ENCODE measurements at regions of chr5 and their contacts with region 1.

Region 1: GRCh38 chr5:38193015-38193581 is 65.3 kb upstream of the EGFLAM start:
- DNase-seq: peak; percentile 12 to 18 (median 14)
- H3K4me3 ChIP-seq: no peak overlapping the region
- H3K4me3 Mint-ChIP-seq: no peak overlapping the region
- H3K27ac ChIP-seq: no peak overlapping the region
- H3K27ac Mint-ChIP-seq: no peak overlapping the region
- H3K4me1 ChIP-seq: no peaks in the 10 kb centered on the region
- H3K4me1 Mint-ChIP-seq: peaks cover 4% of the 10 kb centered on the region
- H3K27me3 ChIP-seq: peaks cover 3 to 5% of the 10 kb centered on the region in 2 donors
- H3K27me3 Mint-ChIP-seq: peaks cover 5 to 22% (median 14%) of the 10 kb centered on the region in 3 donors
- CTCF ChIP-seq: peak; percentile 85

Region 2: GRCh38 chr5:37412515-37413277 is 780.4 kb before region 1 on chr5:
- intact Hi-C with region 1: loop called in 1 of 2 experiments (anchors 10 kb)
- DNase-seq: peak; percentile 35 to 66 (median 59)
- H3K4me3 ChIP-seq: no peak overlapping the region
- H3K4me3 Mint-ChIP-seq: no peak overlapping the region
- H3K27ac ChIP-seq: no peak overlapping the region
- H3K27ac Mint-ChIP-seq: peak overlapping the region in 2 of 7 donors; percentile 14 to 70
- H3K4me1 ChIP-seq: no peaks in the 10 kb centered on the region
- H3K4me1 Mint-ChIP-seq: no peaks in the 10 kb centered on the region
- H3K27me3 ChIP-seq: no peaks in the 10 kb centered on the region
- H3K27me3 Mint-ChIP-seq: peaks cover 0 to 1% (median 0%) of the 10 kb centered on the region in 3 donors
- CTCF ChIP-seq: peak; percentile 81

Region 3: GRCh38 chr5:37837414-37838032 is 355.6 kb before region 1 on chr5:
- intact Hi-C with region 1: loop called (anchors 5 to 10 kb)
- DNase-seq: peak in 1 of 3 donors; percentile 11
- H3K4me3 ChIP-seq: peak overlapping the region in 1 of 3 experiments; percentile 39
- H3K4me3 Mint-ChIP-seq: peak overlapping the region; percentile 55 to 90
- H3K27ac ChIP-seq: no peak overlapping the region
- H3K27ac Mint-ChIP-seq: peak overlapping the region in 3 of 7 donors; percentile 31 to 75 (median 36)
- H3K4me1 ChIP-seq: peaks cover 10 to 19% of the 10 kb centered on the region in 2 donors
- H3K4me1 Mint-ChIP-seq: peaks cover 34% of the 10 kb centered on the region
- H3K27me3 ChIP-seq: peaks cover 85 to 93% of the 10 kb centered on the region in 2 donors
- H3K27me3 Mint-ChIP-seq: peaks cover 88 to 100% (median 96%) of the 10 kb centered on the region in 3 donors
- CTCF ChIP-seq: peak; percentile 64

Region 4: DNA sequence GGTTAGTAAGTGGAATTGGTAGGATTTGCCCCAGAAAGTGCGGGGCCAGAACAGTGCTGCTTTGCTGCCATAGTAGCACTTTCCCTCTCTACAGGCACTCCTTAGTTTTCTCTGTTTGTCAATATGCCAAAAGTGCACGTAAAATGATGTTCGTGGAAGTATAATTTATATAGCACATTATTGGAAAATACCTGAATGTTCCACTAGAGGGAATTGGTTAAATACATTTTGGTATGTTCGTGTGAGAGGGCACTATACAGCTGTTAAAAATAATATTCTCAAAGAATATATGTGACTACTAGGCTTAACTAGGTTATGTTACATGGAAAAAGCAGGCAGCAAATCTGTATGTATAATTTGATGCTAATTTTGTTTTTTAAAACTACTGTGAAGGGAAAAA is 169.3 kb before region 1 on chr5:
- intact Hi-C with region 1: no loop called
- DNase-seq: no peak
- H3K4me3 ChIP-seq: no peak overlapping the region
- H3K4me3 Mint-ChIP-seq: no peak overlapping the region
- H3K27ac ChIP-seq: no peak overlapping the region
- H3K27ac Mint-ChIP-seq: no peak overlapping the region
- H3K4me1 ChIP-seq: no peaks in the 10 kb centered on the region
- H3K4me1 Mint-ChIP-seq: no peaks in the 10 kb centered on the region
- H3K27me3 ChIP-seq: no peaks in the 10 kb centered on the region
- H3K27me3 Mint-ChIP-seq: peaks cover 2 to 5% (median 3%) of the 10 kb centered on the region in 3 donors
- CTCF ChIP-seq: no peak

Region 5: GRCh38 chr5:38226091-38226490 is 33.0 kb after region 1 on chr5:
- intact Hi-C with region 1: no loop called
- DNase-seq: no peak
- H3K4me3 ChIP-seq: no peak overlapping the region
- H3K4me3 Mint-ChIP-seq: no peak overlapping the region
- H3K27ac ChIP-seq: no peak overlapping the region
- H3K27ac Mint-ChIP-seq: no peak overlapping the region
- H3K4me1 ChIP-seq: no peaks in the 10 kb centered on the region
- H3K4me1 Mint-ChIP-seq: no peaks in the 10 kb centered on the region
- H3K27me3 ChIP-seq: no peaks in the 10 kb centered on the region
- H3K27me3 Mint-ChIP-seq: peaks cover under 1 to 2% (median 2%) of the 10 kb centered on the region in 3 donors
- CTCF ChIP-seq: no peak

Measured in CD14-positive monocyte (primary cell).